PC-3 (cell line): ENCODE measurements at regions of chr10 and their contacts with region 1.

Region 1: DNA sequence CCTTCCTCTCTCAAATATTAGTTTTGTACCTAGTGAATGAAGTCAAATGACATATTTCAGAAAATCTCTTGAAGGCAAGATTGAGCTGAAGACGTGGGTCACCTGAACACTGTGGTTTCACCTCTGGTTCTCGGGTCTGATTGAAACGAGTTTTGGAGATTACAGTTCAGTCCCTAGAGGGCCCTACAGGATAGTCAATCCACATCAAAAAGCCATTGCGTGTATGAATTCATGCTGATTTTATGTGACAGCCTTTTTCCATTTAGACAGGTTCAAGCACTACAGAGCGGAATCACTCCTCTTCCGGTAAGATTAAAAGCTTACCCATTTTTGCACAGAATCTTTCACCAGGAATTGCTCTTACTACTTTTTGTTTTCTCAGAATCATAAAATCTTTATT is 62.2 kb downstream of the VIM start:
- DNase-seq: peak; percentile 63
- ATAC-seq: peak; percentile 74
- H3K4me3 ChIP-seq: no peak overlapping the region
- H3K27ac ChIP-seq: no peak overlapping the region
- H3K4me1 ChIP-seq: no peaks in the 10 kb centered on the region
- H3K27me3 ChIP-seq: no peaks in the 10 kb centered on the region
- CTCF ChIP-seq: peak; percentile 71

Region 2: DNA sequence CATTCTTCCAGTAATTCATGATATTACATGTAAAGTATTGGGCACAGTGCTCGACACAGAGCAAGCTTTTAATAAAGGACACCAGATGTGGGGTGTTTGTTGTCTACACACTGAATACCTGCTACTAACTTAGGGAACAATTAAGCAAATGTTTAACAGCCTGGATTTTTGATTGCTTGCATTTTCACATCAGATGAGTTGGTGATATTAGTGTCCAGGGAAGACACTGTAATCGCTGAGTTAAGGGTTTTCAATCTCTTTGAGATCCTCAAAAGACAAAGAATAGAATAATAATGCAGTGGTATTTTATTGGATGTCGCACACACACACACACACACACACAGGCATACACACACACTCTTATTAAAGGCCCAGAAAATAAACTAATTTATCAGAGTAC is 16.9 kb after region 1 on chr10:
- CTCF ChIA-PET with region 1: no interaction called
- POLR2A ChIA-PET with region 1: interaction called, 11 read pairs
- intact Hi-C with region 1: no loop called
- DNase-seq: no peak
- ATAC-seq: no peak
- H3K4me3 ChIP-seq: no peak overlapping the region
- H3K27ac ChIP-seq: no peak overlapping the region
- H3K4me1 ChIP-seq: no peaks in the 10 kb centered on the region
- H3K27me3 ChIP-seq: no peaks in the 10 kb centered on the region
- CTCF ChIP-seq: no peak

Region 3: GRCh38 chr10:17335065-17335464 is 44.8 kb after region 1 on chr10:
- CTCF ChIA-PET with region 1: no interaction called
- POLR2A ChIA-PET with region 1: no interaction called
- intact Hi-C with region 1: no loop called
- DNase-seq: peak; percentile 56
- ATAC-seq: peak; percentile 50; the same call in 1 of the 2 replicates
- H3K4me3 ChIP-seq: peak overlapping the region; percentile 32; the same call in 1 of the 2 replicates
- H3K27ac ChIP-seq: no peak overlapping the region
- H3K4me1 ChIP-seq: peaks cover 9% of the 10 kb centered on the region; the same call in 1 of the 2 replicates
- H3K27me3 ChIP-seq: no peaks in the 10 kb centered on the region
- CTCF ChIP-seq: no peak

Region 4: DNA sequence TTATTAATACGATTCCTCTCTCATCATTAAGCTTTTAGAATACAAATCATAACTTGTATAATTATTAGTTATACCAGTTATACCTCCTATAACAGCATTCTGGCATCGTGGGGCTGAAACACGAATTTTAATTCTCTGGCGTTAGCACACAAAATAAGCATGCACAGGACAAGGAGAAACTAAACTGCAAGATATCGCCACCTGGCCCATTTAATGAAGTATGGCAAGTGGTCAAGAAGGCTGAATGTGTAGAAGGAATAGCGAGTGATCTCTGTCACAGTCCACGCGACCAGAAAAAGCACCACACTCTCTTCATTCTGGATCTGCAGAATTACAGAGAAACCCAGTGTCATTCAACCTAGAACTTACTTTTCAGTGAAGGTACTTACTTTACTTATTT is 308.9 kb after region 1 on chr10:
- CTCF ChIA-PET with region 1: no interaction called
- POLR2A ChIA-PET with region 1: no interaction called
- intact Hi-C with region 1: loop called (anchors 1 kb)
- DNase-seq: peak; percentile 25
- ATAC-seq: 0 out of 2 replicates have a peak, but pooled peaks have one; percentile 22
- H3K4me3 ChIP-seq: no peak overlapping the region
- H3K27ac ChIP-seq: no peak overlapping the region
- H3K4me1 ChIP-seq: no peaks in the 10 kb centered on the region
- H3K27me3 ChIP-seq: no peaks in the 10 kb centered on the region
- CTCF ChIP-seq: peak; percentile 34; the same call in 1 of the 2 replicates